GM10248 (cell line): ENCODE measurements at regions of chr4 and their contacts with region 1.

Region 1: DNA sequence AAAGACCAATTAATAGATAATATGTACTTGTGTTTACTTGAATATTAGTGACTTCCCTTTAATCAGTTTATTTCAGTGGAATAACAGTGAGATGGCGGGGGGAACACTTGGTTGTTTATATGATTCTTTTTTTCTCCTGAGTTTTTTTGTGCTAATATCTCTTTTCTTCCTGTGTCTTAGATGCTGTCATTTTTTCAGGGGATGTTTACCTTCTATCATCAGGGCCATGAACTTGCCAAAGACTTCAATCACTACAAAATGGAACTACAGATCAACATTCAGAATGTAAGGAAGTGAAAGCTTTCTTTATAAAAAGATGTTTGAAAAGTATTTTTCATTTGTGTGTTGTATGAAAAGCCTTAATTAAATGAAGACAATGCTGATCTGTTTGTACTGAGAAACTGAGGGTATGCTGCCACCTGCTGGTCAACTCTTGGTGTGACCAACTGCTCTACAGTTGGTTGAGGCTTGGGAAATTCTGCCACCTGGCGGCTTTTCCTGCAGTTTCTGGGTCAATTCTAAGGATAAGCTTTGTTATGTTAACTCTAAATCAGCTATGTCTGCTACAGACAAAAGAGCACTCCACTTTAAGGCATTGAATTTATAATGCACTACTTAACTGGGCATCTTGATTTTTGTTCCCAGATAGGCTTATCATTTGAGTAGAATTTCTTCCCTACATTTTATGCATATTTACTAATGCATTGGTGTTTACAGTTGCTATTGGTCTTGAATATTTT is 134.8 kb downstream of the ARHGAP10 start:
- DNase-seq: peak; percentile 80
- CTCF ChIP-seq: peak; percentile 97

Region 2: GRCh38 chr4:146814750-146815149 is 1052.0 kb before region 1 on chr4:
- CTCF ChIA-PET with region 1: no interaction called
- POLR2A ChIA-PET with region 1: no interaction called
- DNase-seq: no peak
- CTCF ChIP-seq: no peak

Region 3: GRCh38 chr4:147518846-147519767 is 347.6 kb before region 1 on chr4:
- CTCF ChIA-PET with region 1: interaction called, 32 read pairs
- POLR2A ChIA-PET with region 1: no interaction called
- DNase-seq: peak; percentile 40
- CTCF ChIP-seq: peak; percentile 86

Region 4: DNA sequence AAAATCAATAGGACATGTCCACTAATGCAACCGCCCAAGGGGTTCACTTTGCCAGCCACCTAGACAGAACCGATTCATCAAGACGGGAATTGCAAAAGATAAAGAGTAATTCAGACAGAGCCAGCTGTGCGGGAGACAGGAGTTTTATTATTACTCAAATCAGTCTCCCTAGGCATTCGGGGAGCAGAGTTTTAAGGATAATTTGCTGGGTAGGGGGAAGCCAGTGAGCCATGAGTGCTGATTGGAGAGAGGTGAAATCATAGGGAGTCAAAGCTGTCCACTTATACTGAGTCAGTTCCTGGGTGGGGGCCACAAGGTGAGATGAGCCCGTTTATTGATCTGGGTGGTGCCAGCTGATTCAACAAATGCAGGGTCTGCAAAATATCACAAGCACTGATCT is 241.0 kb before region 1 on chr4:
- CTCF ChIA-PET with region 1: interaction called, 18 read pairs
- POLR2A ChIA-PET with region 1: no interaction called
- DNase-seq: no peak
- CTCF ChIP-seq: no peak

Region 5: DNA sequence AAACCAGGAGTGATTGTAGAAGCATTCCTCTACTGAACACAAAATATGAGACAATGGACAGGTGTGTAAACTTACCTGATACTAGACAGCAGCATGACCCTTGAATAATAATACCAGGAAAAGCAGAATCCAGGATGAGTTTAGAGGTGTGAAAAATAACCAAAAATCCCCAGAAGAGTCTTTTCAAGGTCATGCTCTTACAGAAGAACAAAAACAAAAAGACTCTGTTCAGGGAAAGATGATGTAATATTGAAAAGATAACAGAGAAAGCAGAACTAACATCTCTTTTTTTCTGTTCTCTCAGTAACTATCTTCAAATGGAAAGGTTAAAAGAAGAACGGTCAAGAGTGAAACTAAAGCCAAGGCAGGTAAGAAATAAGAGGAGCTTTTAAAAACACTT is 148.8 kb before region 1 on chr4:
- CTCF ChIA-PET with region 1: interaction called, 135 read pairs
- POLR2A ChIA-PET with region 1: no interaction called
- DNase-seq: peak; percentile 58
- CTCF ChIP-seq: no peak

Region 6: GRCh38 chr4:147780137-147780777 is 86.4 kb before region 1 on chr4:
- CTCF ChIA-PET with region 1: interaction called, 43 read pairs
- POLR2A ChIA-PET with region 1: no interaction called
- DNase-seq: no peak
- CTCF ChIP-seq: no peak

Region 7: GRCh38 chr4:147822128-147822527 is 44.6 kb before region 1 on chr4:
- CTCF ChIA-PET with region 1: interaction called, 16 read pairs
- POLR2A ChIA-PET with region 1: no interaction called
- DNase-seq: no peak
- CTCF ChIP-seq: no peak

Region 8: DNA sequence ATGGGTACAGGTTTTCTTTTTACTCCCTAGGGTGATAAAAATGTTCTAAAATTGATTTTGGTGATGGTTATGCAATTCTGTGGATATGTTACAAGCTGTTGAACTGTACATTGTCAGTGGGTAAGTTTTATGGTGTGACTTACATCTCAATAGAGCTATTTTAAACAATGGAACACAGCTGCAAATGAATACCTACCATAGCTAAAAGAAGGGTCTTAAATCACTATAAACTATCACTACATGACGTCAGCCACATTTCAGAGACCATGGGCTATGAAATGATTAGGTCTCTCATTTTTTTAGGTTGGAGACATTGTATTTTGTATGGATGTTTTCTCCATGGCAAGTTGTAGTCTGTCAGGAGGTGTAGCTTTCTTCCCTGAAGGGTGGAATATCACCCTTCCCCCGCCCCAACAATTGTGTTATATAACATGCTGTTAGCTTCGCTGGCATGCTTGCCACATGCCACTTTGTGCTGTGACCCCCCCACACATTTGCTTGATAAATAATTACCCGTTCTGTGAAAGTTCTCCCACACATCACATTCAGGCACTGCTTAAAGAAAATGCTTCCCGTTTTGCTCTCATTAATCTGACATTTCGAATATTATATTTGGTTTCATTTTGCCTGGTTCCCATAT is 24.9 kb after region 1 on chr4:
- CTCF ChIA-PET with region 1: interaction called, 37 read pairs
- POLR2A ChIA-PET with region 1: no interaction called
- DNase-seq: no peak
- CTCF ChIP-seq: no peak

Region 9: DNA sequence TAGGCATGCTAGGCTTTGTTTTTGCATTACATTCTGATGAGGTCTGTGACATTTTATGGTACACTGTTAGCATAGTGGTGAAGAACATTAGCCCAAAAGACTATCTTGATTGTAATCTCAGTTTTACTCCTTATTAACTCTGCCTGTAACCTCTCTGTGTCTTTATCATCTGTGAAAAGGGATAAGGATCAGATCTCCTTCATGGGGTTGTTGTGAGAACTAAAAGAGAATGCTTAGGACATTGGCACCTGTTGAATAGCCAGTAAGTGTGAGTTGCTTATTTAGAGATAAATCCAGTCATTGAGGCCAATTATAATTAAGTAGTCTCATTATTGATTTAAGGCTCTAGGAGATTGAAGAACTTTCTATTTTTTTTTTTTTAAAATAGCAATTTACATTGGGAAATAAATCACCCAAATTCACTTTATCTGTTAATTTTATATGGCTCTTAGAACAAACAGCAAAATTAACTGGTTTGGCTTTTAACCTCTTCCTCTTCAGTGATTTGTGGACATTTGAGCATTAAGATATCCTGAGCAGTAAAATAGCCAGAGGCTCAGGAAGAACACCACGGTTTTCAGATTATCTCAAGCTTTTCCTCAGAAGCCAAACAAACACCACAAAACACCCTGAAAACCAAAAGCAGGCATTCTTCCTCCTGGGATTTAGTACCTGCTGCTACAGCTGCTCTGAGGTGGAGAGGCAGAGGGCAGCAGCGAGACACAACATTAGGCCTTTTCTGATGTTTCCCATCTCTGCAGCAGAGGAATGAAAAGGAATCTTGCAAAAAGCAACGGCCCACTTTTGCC is 58.1 kb after region 1 on chr4:
- CTCF ChIA-PET with region 1: no interaction called
- POLR2A ChIA-PET with region 1: no interaction called
- DNase-seq: peak; percentile 16
- CTCF ChIP-seq: peak; percentile 53

Region 10: GRCh38 chr4:148056869-148057268 is 190.2 kb after region 1 on chr4:
- CTCF ChIA-PET with region 1: no interaction called
- POLR2A ChIA-PET with region 1: no interaction called
- DNase-seq: peak; percentile 57
- CTCF ChIP-seq: peak; percentile 46